ENCODE measurements at regions of chr1 and their contacts with region 1.

Region 1: GRCh38 chr1:215082532-215083382 is at the start of gene KCNK2:
- DNase-seq: no peak
- H3K4me3 ChIP-seq: peak within 1 kb of the TSS; percentile 78
- H3K27ac ChIP-seq: peak within 1 kb of the TSS; percentile 31
- H3K27me3 ChIP-seq: no peaks in the 10 kb centered on the region
- CTCF ChIP-seq: peak; percentile 17; the same call in 1 of the 2 replicates
- polyA plus RNA-seq, gene KCNK2: 19.7 and 22.8 TPM in 2 replicates

Region 2: GRCh38 chr1:214660862-214661261 is 421.9 kb before region 1 on chr1:
- CTCF ChIA-PET with region 1: interaction called, 14 read pairs
- POLR2A ChIA-PET with region 1: interaction called, 3 read pairs
- DNase-seq: peak; percentile 84
- H3K4me3 ChIP-seq: no peak overlapping the region
- H3K27ac ChIP-seq: no peak overlapping the region
- H3K27me3 ChIP-seq: no peaks in the 10 kb centered on the region
- CTCF ChIP-seq: peak; percentile 88

Region 3: DNA sequence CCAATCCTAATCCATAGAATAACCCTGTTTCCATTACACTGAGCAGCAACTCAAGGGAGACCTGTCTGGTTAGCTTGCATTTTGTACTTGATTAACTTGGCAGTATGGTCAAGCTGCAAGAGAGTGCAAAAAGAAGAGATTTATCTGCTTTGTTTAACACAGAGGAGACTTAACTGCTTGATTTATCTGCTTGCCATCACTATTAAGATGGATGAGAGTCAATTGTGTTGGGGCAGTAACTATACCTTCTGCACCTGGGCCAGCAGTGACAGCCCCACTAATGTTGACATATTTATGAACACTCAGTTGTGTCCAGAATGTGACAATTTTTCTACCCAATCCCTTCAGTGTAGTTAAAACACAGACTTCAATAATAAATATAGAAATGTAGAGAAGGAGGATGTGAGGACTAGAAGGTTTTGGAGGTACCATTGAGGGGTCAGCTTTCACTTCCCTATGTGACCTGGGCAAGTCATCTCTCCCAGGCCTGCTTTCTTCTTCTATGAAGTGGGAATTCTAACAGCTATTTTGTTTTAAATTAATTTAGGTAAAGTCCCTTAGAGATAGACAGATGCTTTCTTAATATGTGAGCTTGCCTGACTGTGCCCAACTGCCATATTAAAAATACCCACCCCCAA is 159.4 kb before region 1 on chr1:
- CTCF ChIA-PET with region 1: no interaction called
- POLR2A ChIA-PET with region 1: no interaction called
- DNase-seq: no peak
- H3K4me3 ChIP-seq: no peak overlapping the region
- H3K27ac ChIP-seq: no peak overlapping the region
- H3K27me3 ChIP-seq: no peaks in the 10 kb centered on the region
- CTCF ChIP-seq: no peak